ENCODE measurements at regions of chr16 and their contacts with region 1.

Region 1: DNA sequence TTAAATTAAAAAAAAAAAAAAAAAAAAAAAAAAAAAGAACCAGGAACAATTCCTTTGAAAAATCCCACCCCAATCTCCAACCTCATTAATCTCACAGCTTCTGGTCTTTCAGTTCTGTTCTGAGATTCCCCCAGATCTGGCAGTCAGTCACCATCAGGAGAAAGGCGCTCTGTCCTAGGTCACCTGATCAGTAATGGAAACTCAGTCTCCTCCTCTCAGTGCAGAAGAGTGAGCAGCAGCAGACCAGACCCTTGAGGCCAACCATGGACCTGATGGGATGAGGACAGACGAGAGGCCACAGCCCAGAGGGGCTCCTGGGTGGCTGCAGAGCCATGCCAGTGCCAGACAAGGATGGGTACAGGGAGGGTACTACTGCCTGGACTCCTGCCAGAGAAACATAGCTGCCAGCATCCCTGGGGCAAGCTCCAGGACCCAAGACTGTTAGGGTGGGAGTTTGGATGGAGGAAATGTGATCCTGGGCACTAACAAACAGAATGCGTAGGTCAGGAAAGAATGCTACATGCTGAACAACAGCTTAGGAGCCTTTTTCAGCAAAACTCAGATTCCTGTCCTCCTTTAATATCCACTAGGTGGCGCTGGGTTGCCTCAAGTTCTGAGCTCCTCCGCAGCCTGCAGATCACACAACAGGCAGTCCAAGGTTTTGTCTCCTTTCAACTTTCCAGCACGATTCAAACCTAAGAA is 28.7 kb downstream of the MPG start:
- DNase-seq: peak; percentile 81
- H3K4me3 ChIP-seq: no peak overlapping the region
- H3K27ac ChIP-seq: no peak overlapping the region
- H3K4me1 ChIP-seq: no peaks in the 10 kb centered on the region
- CTCF ChIP-seq: peak; percentile 89

Region 2: GRCh38 chr16:38939-39892 is 67.6 kb before region 1 on chr16:
- CTCF ChIA-PET with region 1: no interaction called
- POLR2A ChIA-PET with region 1: no interaction called
- intact Hi-C with region 1: no loop called
- DNase-seq: peak; percentile 86
- H3K4me3 ChIP-seq: peak overlapping the region; percentile 1
- H3K27ac ChIP-seq: peak overlapping the region; percentile 59
- H3K4me1 ChIP-seq: peaks cover 29% of the 10 kb centered on the region
- CTCF ChIP-seq: no peak

Region 3: GRCh38 chr16:77807-78443 is 28.8 kb before region 1 on chr16 and contains the start of gene MPG:
- CTCF ChIA-PET with region 1: no interaction called
- POLR2A ChIA-PET with region 1: no interaction called
- intact Hi-C with region 1: no loop called
- DNase-seq: peak; percentile 88
- H3K4me3 ChIP-seq: peak within 1 kb of the TSS; percentile 86
- H3K27ac ChIP-seq: peak within 1 kb of the TSS; percentile 35
- H3K4me1 ChIP-seq: peaks cover 29% of the 10 kb centered on the region
- CTCF ChIP-seq: no peak
- total RNA-seq, gene MPG: 119 and 126 TPM in 2 replicates

Region 4: GRCh38 chr16:159136-159849 is 52.5 kb after region 1 on chr16:
- CTCF ChIA-PET with region 1: no interaction called
- POLR2A ChIA-PET with region 1: no interaction called
- intact Hi-C with region 1: no loop called
- DNase-seq: no peak
- H3K4me3 ChIP-seq: no peak overlapping the region
- H3K27ac ChIP-seq: no peak overlapping the region
- H3K4me1 ChIP-seq: peaks cover 7% of the 10 kb centered on the region
- CTCF ChIP-seq: no peak

Region 5: DNA sequence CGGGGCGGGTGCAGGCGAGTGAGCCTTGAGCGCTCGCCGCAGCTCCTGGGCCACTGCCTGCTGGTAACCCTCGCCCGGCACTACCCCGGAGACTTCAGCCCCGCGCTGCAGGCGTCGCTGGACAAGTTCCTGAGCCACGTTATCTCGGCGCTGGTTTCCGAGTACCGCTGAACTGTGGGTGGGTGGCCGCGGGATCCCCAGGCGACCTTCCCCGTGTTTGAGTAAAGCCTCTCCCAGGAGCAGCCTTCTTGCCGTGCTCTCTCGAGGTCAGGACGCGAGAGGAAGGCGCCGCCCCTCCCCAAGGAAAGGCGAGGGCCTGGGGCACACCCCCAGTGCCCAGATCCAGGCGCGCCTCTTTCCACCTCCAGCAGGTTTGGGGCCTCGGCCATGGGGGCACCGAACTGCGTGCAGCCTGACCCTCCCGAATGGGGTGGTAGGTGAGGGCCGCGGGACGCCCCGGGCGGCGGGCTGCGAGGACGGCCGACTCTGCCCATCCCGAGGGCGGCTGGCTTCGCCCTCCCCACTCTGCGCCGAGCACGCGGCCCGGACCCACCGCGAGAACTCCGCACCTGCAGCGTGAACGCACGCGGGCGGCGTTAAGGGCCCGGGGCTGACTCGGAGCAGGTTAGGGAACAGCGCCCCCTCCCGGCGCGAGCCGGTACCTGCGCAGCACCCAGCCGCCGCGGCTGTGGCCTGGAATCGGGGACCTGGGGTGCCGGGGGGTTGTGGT is 74.3 kb after region 1 on chr16:
- CTCF ChIA-PET with region 1: no interaction called
- POLR2A ChIA-PET with region 1: no interaction called
- intact Hi-C with region 1: loop called (anchors 1 kb)
- DNase-seq: peak; percentile 76
- H3K4me3 ChIP-seq: no peak overlapping the region
- H3K27ac ChIP-seq: no peak overlapping the region
- H3K4me1 ChIP-seq: peaks cover 4% of the 10 kb centered on the region
- CTCF ChIP-seq: peak; percentile 91

Region 6: GRCh38 chr16:188671-189070 is 81.9 kb after region 1 on chr16:
- CTCF ChIA-PET with region 1: no interaction called
- POLR2A ChIA-PET with region 1: no interaction called
- intact Hi-C with region 1: loop called (anchors 1 kb)
- DNase-seq: peak; percentile 61
- H3K4me3 ChIP-seq: no peak overlapping the region
- H3K27ac ChIP-seq: no peak overlapping the region
- H3K4me1 ChIP-seq: no peaks in the 10 kb centered on the region
- CTCF ChIP-seq: peak; percentile 73

Region 7: DNA sequence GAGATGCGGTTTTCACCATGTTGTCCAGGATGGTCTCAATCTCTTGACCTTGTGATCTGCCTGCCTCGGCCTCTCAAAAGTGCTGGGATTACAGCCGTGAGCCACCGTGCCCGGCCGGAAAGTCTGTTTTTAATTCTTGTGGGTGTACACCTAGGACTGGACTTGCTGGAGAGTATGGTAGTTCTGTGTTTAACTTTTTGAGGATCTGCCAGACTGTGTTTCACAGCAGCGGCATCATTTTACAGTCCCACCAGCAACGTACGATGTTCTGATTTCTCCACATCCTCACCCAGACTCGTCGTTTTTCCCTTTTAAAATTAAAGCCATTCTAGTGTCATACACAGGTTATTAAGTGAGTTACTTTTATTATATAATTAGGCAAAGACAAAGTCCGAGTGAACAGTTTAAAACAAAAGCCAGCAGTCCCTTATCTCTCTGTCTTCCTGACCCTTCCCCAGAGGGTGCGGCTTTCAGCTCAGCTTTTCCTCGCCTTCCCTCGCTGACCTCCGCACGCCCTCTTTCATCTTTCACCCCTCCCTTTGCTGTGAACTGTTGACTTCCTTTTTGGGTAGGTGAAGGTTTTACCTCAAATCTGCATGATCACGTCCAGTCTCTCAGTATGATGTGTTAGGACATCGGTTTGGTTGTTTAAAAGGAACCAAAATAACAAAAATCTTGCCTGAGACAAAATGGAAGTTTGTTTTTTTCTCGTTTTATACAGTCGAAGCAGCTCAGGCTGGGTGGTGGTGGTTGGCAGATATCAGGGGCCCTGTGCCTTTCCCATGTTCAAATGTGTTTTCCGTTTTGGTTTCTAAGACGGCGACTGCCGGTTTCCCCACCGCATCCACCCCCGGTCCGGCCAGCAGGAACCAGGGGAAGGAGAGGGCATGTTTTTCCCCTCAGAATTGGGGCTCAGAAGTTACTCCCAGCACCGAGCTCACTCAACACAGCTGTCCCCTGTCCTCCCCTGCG is 145.9 kb after region 1 on chr16:
- CTCF ChIA-PET with region 1: no interaction called
- POLR2A ChIA-PET with region 1: no interaction called
- intact Hi-C with region 1: no loop called
- DNase-seq: no peak
- H3K4me3 ChIP-seq: no peak overlapping the region
- H3K27ac ChIP-seq: no peak overlapping the region
- H3K4me1 ChIP-seq: no peaks in the 10 kb centered on the region
- CTCF ChIP-seq: no peak

Region 8: GRCh38 chr16:361872-362701 is 255.3 kb after region 1 on chr16:
- CTCF ChIA-PET with region 1: no interaction called
- POLR2A ChIA-PET with region 1: no interaction called
- intact Hi-C with region 1: loop called (anchors 1 kb)
- DNase-seq: peak; percentile 83
- H3K4me3 ChIP-seq: no peak overlapping the region
- H3K27ac ChIP-seq: no peak overlapping the region
- H3K4me1 ChIP-seq: no peaks in the 10 kb centered on the region
- CTCF ChIP-seq: peak; percentile 85